Right ventricle myocardium superior (tissue), 1 donor: ENCODE measurements at regions of chr11 and their contacts with region 1.

Region 1: DNA sequence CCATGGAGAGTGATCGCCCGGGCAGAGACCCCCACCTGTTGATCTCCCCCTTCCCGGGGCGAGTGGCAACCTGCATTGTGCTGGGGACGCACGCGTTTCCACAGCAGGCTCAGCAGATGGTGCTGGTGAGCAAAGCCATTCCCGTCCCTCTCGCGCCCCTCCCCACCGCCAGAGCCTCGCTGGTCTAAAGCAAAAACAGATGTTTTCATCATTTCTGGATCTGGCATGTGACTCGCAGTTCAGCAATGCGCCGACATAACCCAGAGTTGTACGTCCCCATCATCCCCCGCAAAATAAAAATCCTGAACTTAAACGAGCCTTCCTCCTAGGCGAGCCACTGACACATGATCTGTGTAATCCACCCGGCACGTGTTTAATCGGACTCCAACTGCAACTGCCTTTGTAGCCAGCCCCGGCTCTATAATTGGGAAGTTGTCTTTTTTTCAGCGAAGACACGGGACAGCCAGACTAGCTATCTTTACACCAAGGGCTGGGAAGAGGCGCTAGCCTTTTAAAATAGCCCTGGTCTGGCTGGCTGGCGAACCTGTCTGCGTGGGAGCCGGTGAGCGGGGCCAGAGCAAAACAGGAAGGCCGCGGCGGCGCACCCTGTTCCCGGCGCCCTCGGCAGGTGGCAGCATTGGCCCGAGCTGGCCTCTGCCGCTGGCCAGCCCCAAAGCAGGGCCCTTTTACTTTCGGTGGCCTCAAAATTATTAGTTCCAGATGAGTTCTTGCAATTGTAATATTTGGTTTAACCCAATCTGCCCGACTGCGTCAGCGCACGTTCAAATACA is 203.0 kb upstream of the SORL1-AS1 start:
- DNase-seq: peak; percentile 92
- ATAC-seq: peak; percentile 98

Region 2: DNA sequence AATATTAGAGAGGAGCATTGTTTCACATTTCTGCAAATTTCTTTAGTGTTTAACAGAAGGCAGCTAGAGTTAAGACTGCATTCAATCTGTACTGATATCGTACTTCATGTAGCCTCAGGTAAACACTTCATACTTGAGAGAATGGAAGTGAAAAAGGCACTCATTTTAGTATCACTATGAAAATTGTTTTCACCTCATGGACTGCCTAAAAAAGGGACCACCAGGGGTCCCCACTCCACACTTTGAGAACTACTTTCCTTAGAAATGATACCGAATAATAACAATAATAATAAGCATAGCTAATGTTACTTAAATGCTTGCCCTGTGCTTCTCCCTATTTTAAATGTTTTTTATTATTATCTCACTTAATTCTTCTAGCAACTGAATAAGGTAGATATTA is 365.2 kb after region 1 on chr11:
- intact Hi-C with region 1: loop called (anchors 10 kb)
- DNase-seq: no peak
- ATAC-seq: no peak

Region 3: GRCh38 chr11:122101625-122102291 is 446.0 kb after region 1 on chr11:
- intact Hi-C with region 1: loop called (anchors 2 kb)
- DNase-seq: peak; percentile 61
- ATAC-seq: peak; percentile 88

Region 4: DNA sequence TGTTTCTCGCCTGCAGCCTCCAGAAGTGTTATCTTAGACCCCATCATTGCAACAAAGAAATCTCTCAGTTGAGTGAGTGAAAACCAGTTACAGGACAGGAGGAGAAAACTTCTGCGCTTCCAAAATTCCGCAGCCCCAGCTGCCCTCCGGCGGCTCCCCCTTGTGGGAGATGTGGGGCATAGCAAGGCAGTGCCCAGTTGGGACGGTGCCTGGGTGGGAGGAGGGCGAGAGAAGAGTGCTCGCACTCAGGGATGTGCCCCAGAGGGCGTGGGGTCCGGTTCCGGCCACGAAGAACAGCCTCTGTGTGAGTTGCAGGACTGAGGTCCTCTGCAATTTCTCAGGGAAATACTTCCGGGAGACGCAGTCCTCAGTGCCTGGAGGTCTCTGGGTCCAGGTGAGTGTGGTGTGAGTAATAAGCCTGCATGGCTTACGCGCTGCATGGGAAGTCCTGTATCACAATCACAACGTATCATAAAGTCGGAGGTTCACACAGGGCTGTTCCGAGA is 547.3 kb after region 1 on chr11:
- intact Hi-C with region 1: loop called (anchors 5 kb)
- DNase-seq: peak; percentile 80
- ATAC-seq: peak; percentile 91